ENCODE measurements at regions of chr2 and their contacts with region 1.

Region 1: GRCh38 chr2:85266146-85267041 is 61.4 kb downstream of the TGOLN2 start:
- DNase-seq: peak; percentile 73 to 89 (median 77)
- ATAC-seq: peak in 3 of 4 donors; percentile 44 to 57 (median 51)
- H3K4me3 ChIP-seq: no peak overlapping the region
- H3K27ac ChIP-seq: peak overlapping the region in 5 of 12 donors; percentile 3 to 71 (median 56)
- H3K4me1 ChIP-seq: peaks cover 5 to 79% (median 45%) of the 10 kb centered on the region in 12 donors
- H3K27me3 ChIP-seq: no peaks in the 10 kb centered on the region
- CTCF ChIP-seq: peak; percentile 67 to 93 (median 85)
- POLR2A ChIP-seq: no peak

Region 2: GRCh38 chr2:85282914-85283313 is 16.5 kb after region 1 on chr2:
- intact Hi-C with region 1: loop called in 1 of 10 experiments (anchors 2 kb)
- DNase-seq: no peak
- ATAC-seq: no peak
- H3K4me3 ChIP-seq: no peak overlapping the region
- H3K27ac ChIP-seq: no peak overlapping the region
- H3K4me1 ChIP-seq: peaks cover 0 to 24% (median 16%) of the 10 kb centered on the region in 12 donors
- H3K27me3 ChIP-seq: no peaks in the 10 kb centered on the region
- CTCF ChIP-seq: no peak
- POLR2A ChIP-seq: no peak